Caco-2 (cell line): ENCODE measurements at regions of chr7 and their contacts with region 1.

Region 1: DNA sequence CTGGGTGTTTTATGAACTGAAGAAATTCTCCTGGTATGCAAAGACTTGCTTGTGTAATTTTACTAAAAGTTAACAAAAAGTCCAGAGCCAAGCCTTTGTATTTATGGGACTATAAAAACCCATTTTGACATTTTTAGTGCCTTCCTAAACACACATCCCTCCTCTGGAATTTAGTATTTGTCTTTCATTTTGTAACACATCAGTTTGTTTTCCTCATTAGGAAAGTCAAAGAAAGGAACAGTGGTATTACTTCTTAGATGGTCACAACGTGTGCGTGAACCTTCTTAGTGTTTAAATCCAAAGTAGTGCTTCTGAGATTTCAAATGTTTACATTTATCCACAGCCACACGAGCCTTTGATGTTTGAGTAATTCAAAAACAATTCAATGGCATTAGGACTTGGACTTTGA is 103.2 kb upstream of the TMEM106B start:
- DNase-seq: peak; percentile 45 to 63
- H3K4me3 ChIP-seq: no peak overlapping the region
- H3K4me3 Mint-ChIP-seq: peak overlapping the region; percentile 15
- H3K27ac Mint-ChIP-seq: peak overlapping the region; percentile 24
- H3K4me1 ChIP-seq: peaks cover 66% of the 10 kb centered on the region
- H3K4me1 Mint-ChIP-seq: peaks cover 11% of the 10 kb centered on the region
- H3K27me3 ChIP-seq: no peaks in the 10 kb centered on the region
- H3K27me3 Mint-ChIP-seq: no peaks in the 10 kb centered on the region
- CTCF ChIP-seq: no peak

Region 2: DNA sequence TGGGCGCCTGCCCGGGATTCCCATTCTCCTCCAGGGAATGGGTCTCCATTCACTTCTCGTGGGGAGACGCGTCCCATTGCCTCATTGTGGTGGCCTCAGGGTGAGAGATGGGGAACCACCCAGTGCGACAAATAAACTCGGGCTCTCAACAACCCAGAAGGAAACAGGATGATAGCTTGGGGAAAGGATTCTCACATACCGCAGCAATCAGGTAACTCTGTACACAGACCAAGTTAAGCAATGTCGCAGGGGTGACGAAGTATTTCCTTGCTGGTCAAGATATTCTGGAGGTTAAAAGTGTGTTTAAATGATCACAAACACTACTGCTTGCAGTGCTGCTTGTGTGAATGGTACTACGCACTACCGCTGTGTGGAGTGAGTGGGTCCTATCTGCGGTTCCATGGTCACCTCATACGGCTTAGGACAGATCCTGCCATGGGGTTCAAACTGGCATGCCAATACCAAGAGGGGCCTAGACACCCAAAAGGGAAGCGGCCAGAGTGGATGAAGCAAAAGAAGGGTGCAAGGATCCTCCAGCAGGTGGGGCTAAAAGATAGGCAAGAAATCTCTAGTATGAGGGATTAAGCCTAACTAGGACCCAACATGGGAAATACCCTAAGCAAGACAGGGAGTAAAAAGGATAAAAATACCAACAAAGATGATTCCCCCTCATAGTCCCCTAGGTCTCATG is 40.6 kb before region 1 on chr7:
- CTCF ChIA-PET with region 1: no interaction called
- POLR2A ChIA-PET with region 1: no interaction called
- intact Hi-C with region 1: loop called (anchors 1 kb)
- DNase-seq: peak; percentile 59 to 78
- H3K4me3 ChIP-seq: no peak overlapping the region
- H3K4me3 Mint-ChIP-seq: no peak overlapping the region
- H3K27ac Mint-ChIP-seq: peak overlapping the region; percentile 43
- H3K4me1 ChIP-seq: peaks cover 12% of the 10 kb centered on the region; the same call in 1 of the 2 replicates
- H3K4me1 Mint-ChIP-seq: peaks cover 13% of the 10 kb centered on the region
- H3K27me3 ChIP-seq: no peaks in the 10 kb centered on the region
- H3K27me3 Mint-ChIP-seq: no peaks in the 10 kb centered on the region
- CTCF ChIP-seq: peak; percentile 77 to 84

Region 3: GRCh38 chr7:12090757-12091221 is 17.1 kb before region 1 on chr7:
- CTCF ChIA-PET with region 1: no interaction called
- POLR2A ChIA-PET with region 1: no interaction called
- intact Hi-C with region 1: loop called (anchors 2 kb)
- DNase-seq: no peak
- H3K4me3 ChIP-seq: no peak overlapping the region
- H3K4me3 Mint-ChIP-seq: no peak overlapping the region
- H3K27ac Mint-ChIP-seq: peak overlapping the region; percentile 43
- H3K4me1 ChIP-seq: peaks cover 5% of the 10 kb centered on the region; the same call in 1 of the 2 replicates
- H3K4me1 Mint-ChIP-seq: peaks cover 8% of the 10 kb centered on the region
- H3K27me3 ChIP-seq: no peaks in the 10 kb centered on the region
- H3K27me3 Mint-ChIP-seq: no peaks in the 10 kb centered on the region
- CTCF ChIP-seq: no peak

Region 4: DNA sequence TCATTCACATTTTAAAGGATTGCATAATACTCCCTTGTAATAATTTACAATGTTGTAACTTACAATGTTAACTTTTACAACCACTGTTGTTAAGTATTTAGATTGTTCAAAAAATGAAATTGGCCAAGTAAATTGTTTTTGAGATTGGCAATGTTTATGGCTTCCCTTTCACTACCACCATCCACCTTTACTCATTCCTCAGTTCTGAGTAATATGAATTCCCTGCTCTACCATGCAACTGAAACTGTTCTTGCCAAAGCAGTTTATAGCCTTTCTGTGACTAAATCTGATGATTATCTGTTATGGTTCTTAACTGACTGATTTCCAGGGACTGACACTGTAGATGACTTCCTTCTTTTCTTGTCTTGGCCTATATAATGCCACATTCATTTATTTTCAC is 22.8 kb after region 1 on chr7:
- CTCF ChIA-PET with region 1: no interaction called
- POLR2A ChIA-PET with region 1: no interaction called
- intact Hi-C with region 1: loop called (anchors 1 kb)
- DNase-seq: no peak
- H3K4me3 ChIP-seq: no peak overlapping the region
- H3K4me3 Mint-ChIP-seq: no peak overlapping the region
- H3K27ac Mint-ChIP-seq: no peak overlapping the region
- H3K4me1 ChIP-seq: peaks cover 20% of the 10 kb centered on the region
- H3K4me1 Mint-ChIP-seq: peaks cover 11% of the 10 kb centered on the region
- H3K27me3 ChIP-seq: no peaks in the 10 kb centered on the region
- H3K27me3 Mint-ChIP-seq: no peaks in the 10 kb centered on the region
- CTCF ChIP-seq: no peak

Region 5: GRCh38 chr7:12244129-12244528 is 136.3 kb after region 1 on chr7:
- CTCF ChIA-PET with region 1: interaction called, 3 read pairs
- POLR2A ChIA-PET with region 1: no interaction called
- intact Hi-C with region 1: loop called (anchors 2 kb)
- DNase-seq: peak; percentile 69 to 71
- H3K4me3 ChIP-seq: no peak overlapping the region
- H3K4me3 Mint-ChIP-seq: no peak overlapping the region
- H3K27ac Mint-ChIP-seq: no peak overlapping the region
- H3K4me1 ChIP-seq: no peaks in the 10 kb centered on the region
- H3K4me1 Mint-ChIP-seq: no peaks in the 10 kb centered on the region
- H3K27me3 ChIP-seq: no peaks in the 10 kb centered on the region
- H3K27me3 Mint-ChIP-seq: no peaks in the 10 kb centered on the region
- CTCF ChIP-seq: peak; percentile 59 to 78